Activated naive CD4-positive, alpha-beta T cell treated with anti-CD3 and anti-CD28 coated beads, Interleukin-2, amount 10 ng/mL, durations not matched to agents 7 days and 5 days (primary cell): ENCODE measurements at regions of chr7 and their contacts with region 1.

Region 1: DNA sequence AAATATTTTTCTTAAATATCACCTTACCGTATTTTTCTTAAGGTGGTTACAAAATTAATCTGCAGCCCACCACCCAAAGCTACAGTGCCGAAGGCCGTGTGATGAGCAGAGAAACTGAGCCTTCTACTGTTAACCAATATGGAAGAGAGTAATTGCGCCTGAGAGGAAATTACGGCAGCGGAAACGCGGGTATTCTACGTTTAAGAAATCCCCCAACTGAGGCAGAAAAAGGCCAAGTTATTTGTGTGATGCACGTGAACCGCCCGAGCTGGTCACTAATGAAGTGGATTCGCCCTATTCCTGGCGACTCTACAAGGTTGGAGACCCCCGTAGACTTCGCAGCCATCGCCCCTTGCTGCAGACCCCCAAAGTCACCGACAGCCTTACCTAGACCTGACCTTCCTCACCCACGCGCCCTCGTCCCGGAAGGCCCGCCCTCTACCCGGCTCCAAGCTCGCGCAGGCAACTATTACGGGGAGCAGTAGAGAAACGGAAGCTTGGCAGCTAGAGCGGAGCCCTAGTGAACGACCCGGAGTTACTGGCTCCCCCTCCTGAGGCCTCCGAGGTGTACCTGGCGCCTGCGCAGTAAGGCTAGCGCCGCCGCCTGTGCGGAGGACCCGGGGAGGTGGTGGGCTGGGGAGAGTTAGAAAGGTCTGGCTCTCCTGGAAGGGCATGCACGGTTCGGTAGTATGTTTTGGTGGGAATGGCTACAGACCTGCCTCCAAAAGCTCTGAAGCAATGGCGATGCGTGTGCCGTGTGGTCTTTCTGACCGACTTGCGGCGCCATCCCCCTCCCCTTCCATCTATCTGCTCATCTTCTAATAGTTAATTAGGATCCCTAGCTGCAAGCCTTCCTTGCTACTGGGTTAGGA is at the start of gene MRPS33:
- DNase-seq: peak; percentile 96
- H3K4me3 Mint-ChIP-seq: peak within 1 kb of the TSS; percentile 97
- H3K27ac Mint-ChIP-seq: peak within 1 kb of the TSS; percentile 99
- H3K4me1 Mint-ChIP-seq: peaks cover 39% of the 10 kb centered on the region
- H3K27me3 Mint-ChIP-seq: peaks cover 19% of the 10 kb centered on the region

Region 2: GRCh38 chr7:140625908-140626868 is 388.6 kb before region 1 on chr7:
- CTCF ChIA-PET with region 1: no interaction called
- DNase-seq: no peak
- H3K4me3 Mint-ChIP-seq: no peak overlapping the region
- H3K27ac Mint-ChIP-seq: no peak overlapping the region
- H3K4me1 Mint-ChIP-seq: no peaks in the 10 kb centered on the region
- H3K27me3 Mint-ChIP-seq: peaks cover 24% of the 10 kb centered on the region

Region 3: GRCh38 chr7:140673063-140673773 is 341.5 kb before region 1 on chr7:
- CTCF ChIA-PET with region 1: interaction called, 22 read pairs
- DNase-seq: peak; percentile 72
- H3K4me3 Mint-ChIP-seq: peak overlapping the region; percentile 83
- H3K27ac Mint-ChIP-seq: peak overlapping the region; percentile 87
- H3K4me1 Mint-ChIP-seq: peaks cover 45% of the 10 kb centered on the region
- H3K27me3 Mint-ChIP-seq: peaks cover 8% of the 10 kb centered on the region

Region 4: GRCh38 chr7:140902303-140902953 is 112.3 kb before region 1 on chr7:
- CTCF ChIA-PET with region 1: no interaction called
- DNase-seq: no peak
- H3K4me3 Mint-ChIP-seq: peak overlapping the region; percentile 49
- H3K27ac Mint-ChIP-seq: peak overlapping the region; percentile 93
- H3K4me1 Mint-ChIP-seq: peaks cover 33% of the 10 kb centered on the region
- H3K27me3 Mint-ChIP-seq: no peaks in the 10 kb centered on the region

Region 5: GRCh38 chr7:141039376-141039775 is 24.6 kb after region 1 on chr7:
- CTCF ChIA-PET with region 1: no interaction called
- DNase-seq: no peak
- H3K4me3 Mint-ChIP-seq: no peak overlapping the region
- H3K27ac Mint-ChIP-seq: no peak overlapping the region
- H3K4me1 Mint-ChIP-seq: no peaks in the 10 kb centered on the region
- H3K27me3 Mint-ChIP-seq: peaks cover 15% of the 10 kb centered on the region